Heart right ventricle (tissue), 16 donors: ENCODE measurements at regions of chr1 and their contacts with region 1.

Region 1: DNA sequence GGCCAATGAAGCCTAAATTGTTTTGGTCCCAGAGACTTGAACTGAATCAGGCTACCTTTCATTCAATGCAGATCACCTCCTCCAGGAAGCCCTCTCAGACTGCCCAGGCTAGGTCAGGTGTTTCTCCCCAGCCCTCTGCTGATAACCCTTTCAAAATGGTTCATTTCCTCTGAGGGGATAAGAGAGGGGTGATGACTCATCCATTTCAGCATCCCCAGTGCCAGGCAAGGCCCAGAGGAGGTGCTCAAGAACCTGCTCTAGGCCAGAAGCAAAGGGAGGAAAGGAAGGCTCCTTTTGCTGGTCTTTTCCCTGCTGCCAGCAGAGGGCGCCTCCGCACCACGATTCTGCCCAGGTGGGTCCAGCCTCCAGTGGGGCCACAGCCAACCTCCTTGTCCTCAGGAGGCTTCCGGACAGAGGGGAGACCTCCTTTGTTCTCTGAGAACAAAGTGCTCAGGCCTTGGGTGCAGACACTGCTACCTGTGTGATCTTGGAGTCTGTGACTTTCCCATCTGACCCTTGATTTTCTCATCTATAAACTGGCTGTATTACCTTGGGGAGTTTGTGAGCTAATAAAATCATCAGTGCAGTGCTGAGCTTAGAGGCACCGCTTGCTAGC is 45.3 kb upstream of the ARHGEF10L start:
- DNase-seq: peak; percentile 56 to 75
- ATAC-seq: peak; percentile 38 to 89 (median 85)
- H3K4me3 ChIP-seq: no peak overlapping the region
- H3K27ac ChIP-seq: no peak overlapping the region
- H3K4me1 ChIP-seq: no peaks in the 10 kb centered on the region
- H3K27me3 ChIP-seq: peaks cover 0 to 7% (median 0%) of the 10 kb centered on the region in 7 donors
- CTCF ChIP-seq: peak; percentile 67 to 92 (median 84)

Region 2: GRCh38 chr1:17419626-17420328 is 74.4 kb before region 1 on chr1:
- intact Hi-C with region 1: loop called in 4 of 10 experiments (anchors 5 to 10 kb)
- DNase-seq: peak; percentile 71 to 81
- ATAC-seq: peak; percentile 77 to 87 (median 84)
- H3K4me3 ChIP-seq: peak overlapping the region in 2 of 10 donors; percentile 7 to 18
- H3K27ac ChIP-seq: peak overlapping the region in 6 of 10 donors; percentile 24 to 72 (median 58)
- H3K4me1 ChIP-seq: peaks cover 5 to 32% (median 20%) of the 10 kb centered on the region in 9 donors
- H3K27me3 ChIP-seq: no peaks in the 10 kb centered on the region
- CTCF ChIP-seq: peak in 8 of 9 donors; percentile 98 to 100 (median 100)

Region 3: DNA sequence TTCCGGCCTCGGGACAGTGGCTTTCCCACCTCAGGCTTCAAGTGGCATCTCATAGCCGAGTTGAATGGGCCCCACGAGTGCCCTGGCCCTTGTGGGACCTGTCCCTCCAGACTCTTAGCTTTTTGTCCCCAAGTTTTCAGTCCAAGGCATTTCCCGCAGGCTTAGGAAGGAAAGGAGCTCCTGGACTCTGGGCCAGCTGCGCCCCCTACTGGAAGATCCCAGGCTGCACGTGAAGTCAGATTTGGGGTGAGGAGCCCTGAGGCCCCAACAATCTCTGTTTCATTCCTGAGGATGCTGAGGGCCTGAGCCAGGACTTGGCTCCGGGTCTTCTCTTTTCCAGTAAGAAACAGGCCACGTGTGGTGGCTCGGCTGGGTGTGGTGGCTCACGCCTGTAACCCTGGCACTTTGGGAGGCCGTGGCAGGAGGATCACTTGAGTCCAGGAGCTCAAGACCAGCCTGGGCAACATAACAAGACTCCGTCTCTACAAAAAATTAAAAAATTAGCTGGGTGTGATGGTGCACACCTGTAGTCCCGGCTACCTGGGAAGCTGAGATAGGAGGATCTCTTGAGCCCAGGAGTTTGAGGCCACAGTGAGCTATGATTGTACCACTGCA is 112.7 kb after region 1 on chr1:
- intact Hi-C with region 1: loop called in 1 of 10 experiments (anchors 2 kb)
- DNase-seq: peak; percentile 73 to 78
- ATAC-seq: peak; percentile 10 to 75 (median 60)
- H3K4me3 ChIP-seq: no peak overlapping the region
- H3K27ac ChIP-seq: peak overlapping the region; percentile 15 to 93 (median 82)
- H3K4me1 ChIP-seq: peaks cover 10 to 25% (median 21%) of the 10 kb centered on the region in 9 donors
- H3K27me3 ChIP-seq: no peaks in the 10 kb centered on the region
- CTCF ChIP-seq: peak; percentile 71 to 93 (median 90)

Region 4: GRCh38 chr1:17826165-17826488 is 331.9 kb after region 1 on chr1:
- intact Hi-C with region 1: loop called in 1 of 10 experiments (anchors 10 kb)
- DNase-seq: peak in 1 of 2 donors; percentile 57
- ATAC-seq: peak in 7 of 8 donors; percentile 19 to 45 (median 30)
- H3K4me3 ChIP-seq: no peak overlapping the region
- H3K27ac ChIP-seq: no peak overlapping the region
- H3K4me1 ChIP-seq: peaks cover 0 to 17% (median 0%) of the 10 kb centered on the region in 9 donors
- H3K27me3 ChIP-seq: peaks cover 0 to 29% (median 7%) of the 10 kb centered on the region in 7 donors
- CTCF ChIP-seq: peak; percentile 35 to 71 (median 62)

Region 5: DNA sequence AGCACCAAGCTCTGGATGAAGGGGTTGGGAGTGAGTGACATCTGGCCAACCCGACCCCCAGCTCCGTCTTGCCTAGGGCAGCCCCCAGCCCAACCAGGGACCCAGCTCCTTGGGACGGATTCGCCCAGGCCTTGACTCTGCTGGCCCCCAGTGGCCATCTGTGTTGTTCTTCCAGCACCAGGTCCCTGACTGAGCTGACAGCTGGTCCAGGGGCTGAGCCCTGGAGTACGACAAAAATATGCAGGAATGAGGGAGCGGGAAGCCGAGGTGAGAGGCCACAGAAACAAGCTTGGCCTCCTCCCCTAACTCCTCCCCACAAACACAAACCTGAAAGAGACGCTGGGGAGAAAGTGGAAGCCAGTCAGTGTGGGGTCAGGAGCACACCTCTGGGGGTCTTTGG is 1081.4 kb after region 1 on chr1:
- intact Hi-C with region 1: loop called in 4 of 10 experiments (anchors 10 kb)
- DNase-seq: peak; percentile 38 to 75
- ATAC-seq: peak in 5 of 8 donors; percentile 15 to 61 (median 55)
- H3K4me3 ChIP-seq: no peak overlapping the region
- H3K27ac ChIP-seq: no peak overlapping the region
- H3K4me1 ChIP-seq: no peaks in the 10 kb centered on the region
- H3K27me3 ChIP-seq: peaks cover 0 to 54% (median 31%) of the 10 kb centered on the region in 7 donors
- CTCF ChIP-seq: peak in 8 of 9 donors; percentile 20 to 84 (median 68)

Region 6: DNA sequence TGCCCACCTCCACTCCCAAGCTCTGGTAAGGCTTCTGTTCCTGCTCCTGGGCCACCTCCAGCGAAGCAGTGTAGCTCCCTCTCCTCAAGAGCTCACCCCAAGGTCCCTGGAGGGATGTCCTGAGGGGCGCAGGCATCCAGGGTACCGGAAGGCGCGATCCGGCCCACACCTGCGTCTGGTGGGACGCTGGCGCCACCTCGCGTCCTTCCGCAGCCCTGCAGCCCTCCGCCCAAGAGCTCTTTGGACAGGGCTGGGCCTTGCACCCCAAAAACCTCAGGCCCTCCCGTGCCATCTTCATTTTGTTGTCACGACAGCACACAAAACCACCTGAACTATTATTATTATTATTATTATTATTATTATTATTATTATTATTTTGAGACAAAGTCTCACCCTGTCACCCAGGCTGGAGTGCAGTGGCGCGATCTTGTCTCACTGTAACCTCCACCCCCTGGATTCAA is 1087.2 kb after region 1 on chr1:
- intact Hi-C with region 1: loop called in 4 of 10 experiments (anchors 10 kb)
- DNase-seq: peak in 1 of 2 donors; percentile 23
- ATAC-seq: peak in 3 of 8 donors; percentile 34 to 47 (median 45)
- H3K4me3 ChIP-seq: no peak overlapping the region
- H3K27ac ChIP-seq: no peak overlapping the region
- H3K4me1 ChIP-seq: peaks cover 0 to 15% (median 0%) of the 10 kb centered on the region in 9 donors
- H3K27me3 ChIP-seq: peaks cover 0 to 29% (median 19%) of the 10 kb centered on the region in 7 donors
- CTCF ChIP-seq: peak; percentile 27 to 75 (median 66)